ENCODE measurements at regions of chr12 and their contacts with region 1.

Region 1: GRCh38 chr12:123250484-123251383 is 17.5 kb downstream of the MTRFR start:
- DNase-seq: no peak
- H3K4me3 Mint-ChIP-seq: no peak overlapping the region
- H3K27ac Mint-ChIP-seq: peak overlapping the region; percentile 60
- H3K4me1 Mint-ChIP-seq: peaks cover 34% of the 10 kb centered on the region
- H3K27me3 Mint-ChIP-seq: no peaks in the 10 kb centered on the region

Region 2: DNA sequence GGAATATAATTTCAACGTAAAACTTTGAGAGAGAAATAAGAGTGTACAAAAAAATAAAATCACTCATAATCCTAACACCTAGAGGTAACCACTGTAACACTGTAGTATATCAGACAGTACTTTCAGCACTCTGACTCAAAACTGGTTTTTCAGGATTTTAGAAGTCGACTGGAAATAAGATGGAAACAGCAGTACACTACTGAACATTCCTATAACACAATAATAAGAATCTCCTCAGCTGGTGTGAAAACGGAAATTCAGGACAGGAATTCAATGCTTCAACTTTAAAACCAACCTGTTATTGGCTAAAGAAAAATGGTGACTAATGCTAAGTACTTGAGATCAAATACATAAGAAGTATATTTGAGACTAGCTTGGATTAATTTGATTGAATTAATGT is 87.5 kb before region 1 on chr12:
- CTCF ChIA-PET with region 1: no interaction called
- POLR2A ChIA-PET with region 1: no interaction called
- DNase-seq: no peak
- H3K4me3 Mint-ChIP-seq: no peak overlapping the region
- H3K27ac Mint-ChIP-seq: no peak overlapping the region
- H3K4me1 Mint-ChIP-seq: no peaks in the 10 kb centered on the region
- H3K27me3 Mint-ChIP-seq: no peaks in the 10 kb centered on the region

Region 3: DNA sequence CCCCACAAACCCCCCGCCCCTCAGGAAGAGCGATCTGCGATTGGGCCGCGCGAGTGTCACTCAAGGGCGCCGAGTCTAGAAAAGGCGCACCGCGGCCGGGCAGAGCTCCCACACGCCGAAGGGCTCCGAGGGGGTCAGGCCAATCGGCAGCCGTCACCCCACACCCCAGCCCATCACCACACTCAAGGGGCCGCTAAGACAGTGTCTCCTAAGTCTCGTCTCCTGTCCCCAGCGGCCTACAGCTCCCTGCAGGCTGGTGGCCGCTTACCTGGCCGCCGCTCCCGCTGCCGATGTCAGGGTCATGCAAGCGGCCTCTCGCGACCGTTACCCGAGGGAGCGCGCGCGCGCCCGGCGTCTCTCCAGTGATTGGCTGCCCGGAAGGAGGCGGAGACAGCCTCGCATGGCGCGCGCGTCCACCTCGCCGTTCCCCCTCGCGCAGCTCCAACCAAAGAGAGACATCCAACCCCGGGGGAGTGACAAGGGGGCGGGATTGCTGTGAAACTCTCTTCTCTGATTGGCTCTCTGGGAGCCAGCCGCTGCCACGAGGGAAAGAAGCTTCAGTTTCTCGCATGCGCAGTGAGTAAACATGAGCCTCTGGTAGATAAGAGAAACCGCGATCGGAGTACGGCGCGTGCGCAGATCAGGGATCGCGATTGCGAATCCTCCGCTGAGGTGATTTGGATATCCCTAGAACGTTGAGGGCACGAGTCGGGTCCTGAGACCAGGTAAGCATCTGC is 17.8 kb before region 1 on chr12 and contains the starts of genes MPHOSPH9 and MTRFR:
- CTCF ChIA-PET with region 1: interaction called, 10 read pairs
- POLR2A ChIA-PET with region 1: interaction called, 19 read pairs
- DNase-seq: peak; percentile 100
- H3K4me3 Mint-ChIP-seq: peak within 1 kb of the TSS; percentile 95
- H3K27ac Mint-ChIP-seq: peak within 1 kb of the TSS; percentile 99
- H3K4me1 Mint-ChIP-seq: peaks cover 61% of the 10 kb centered on the region
- H3K27me3 Mint-ChIP-seq: no peaks in the 10 kb centered on the region
- total RNA-seq, gene MPHOSPH9: 134 to 162 TPM
- total RNA-seq, gene MTRFR: 29.2 to 30.8 TPM

Region 4: DNA sequence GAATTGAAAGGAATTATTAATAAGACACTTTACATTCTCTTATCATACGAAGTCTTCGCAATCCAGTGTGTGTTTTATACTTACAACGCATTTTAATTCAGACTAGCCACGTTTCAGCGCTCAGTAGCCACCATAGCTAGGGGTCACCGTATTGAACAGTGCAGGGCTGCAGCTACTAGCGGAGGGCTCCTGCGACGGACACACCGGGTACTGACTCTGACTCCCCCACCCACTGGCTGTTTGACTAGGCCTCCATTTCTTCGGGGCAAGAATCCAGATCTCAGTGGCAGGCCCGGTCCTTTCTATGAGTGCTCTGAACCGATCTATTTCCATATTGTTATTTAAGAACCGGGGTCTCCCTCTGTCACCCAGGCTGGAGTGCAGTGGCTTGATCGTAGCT is 22.4 kb after region 1 on chr12:
- CTCF ChIA-PET with region 1: no interaction called
- POLR2A ChIA-PET with region 1: no interaction called
- DNase-seq: no peak
- H3K4me3 Mint-ChIP-seq: peak overlapping the region; percentile 66
- H3K27ac Mint-ChIP-seq: no peak overlapping the region
- H3K4me1 Mint-ChIP-seq: peaks cover 29% of the 10 kb centered on the region
- H3K27me3 Mint-ChIP-seq: no peaks in the 10 kb centered on the region

Measured in activated CD4-positive, alpha-beta T cell treated with anti-CD3 and anti-CD28 coated beads, Interleukin-2, amount 10 ng/mL, durations not matched to agents 7 days and 5 days (primary cell).